Heart right ventricle (tissue), 16 donors: ENCODE measurements at regions of chr16 and their contacts with region 1.

Region 1: DNA sequence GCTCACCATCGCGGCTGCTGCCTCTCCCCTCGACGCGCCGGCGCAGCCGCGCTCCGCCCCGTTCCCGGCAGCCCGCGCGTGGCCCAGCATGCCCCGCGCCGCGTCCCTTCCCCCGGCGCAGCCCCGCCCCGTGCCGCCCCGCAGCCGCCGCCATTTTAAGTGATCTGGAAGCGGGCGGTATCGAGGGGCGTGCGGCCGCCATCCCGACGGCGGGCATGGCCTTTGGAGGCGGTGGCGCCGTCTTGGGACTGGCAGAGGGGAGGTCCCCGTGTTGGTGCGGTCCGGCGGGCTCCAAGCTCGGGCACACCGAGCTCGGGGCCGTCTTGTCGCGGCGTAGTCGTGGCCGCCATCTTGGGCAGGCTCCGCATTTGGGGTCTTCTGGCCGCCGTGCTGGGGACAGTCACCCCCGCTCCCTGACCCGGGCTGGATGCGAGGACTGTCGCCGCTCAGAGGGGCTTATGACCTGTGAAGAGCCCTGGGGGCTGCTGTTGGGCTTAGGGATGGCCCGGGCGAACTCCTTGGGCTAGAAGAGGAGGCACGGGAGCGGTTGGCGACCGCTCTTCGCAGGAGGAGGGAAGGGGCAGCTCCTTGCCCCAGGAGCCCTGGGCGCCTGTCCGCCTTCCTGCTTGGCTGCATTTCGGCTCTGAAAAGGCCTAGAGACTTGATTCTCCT is at the start of gene ELOB:
- DNase-seq: peak; percentile 87 to 90
- ATAC-seq: peak; percentile 92 to 98 (median 94)
- H3K4me3 ChIP-seq: peak within 1 kb of the TSS; percentile 81 to 100 (median 98)
- H3K27ac ChIP-seq: peak within 1 kb of the TSS; percentile 98 to 100 (median 100)
- H3K4me1 ChIP-seq: peaks cover 9 to 43% (median 28%) of the 10 kb centered on the region in 9 donors
- H3K27me3 ChIP-seq: no peaks in the 10 kb centered on the region
- CTCF ChIP-seq: no peak
- total RNA-seq, gene ELOB: 248 to 373 (median 323) TPM

Region 2: DNA sequence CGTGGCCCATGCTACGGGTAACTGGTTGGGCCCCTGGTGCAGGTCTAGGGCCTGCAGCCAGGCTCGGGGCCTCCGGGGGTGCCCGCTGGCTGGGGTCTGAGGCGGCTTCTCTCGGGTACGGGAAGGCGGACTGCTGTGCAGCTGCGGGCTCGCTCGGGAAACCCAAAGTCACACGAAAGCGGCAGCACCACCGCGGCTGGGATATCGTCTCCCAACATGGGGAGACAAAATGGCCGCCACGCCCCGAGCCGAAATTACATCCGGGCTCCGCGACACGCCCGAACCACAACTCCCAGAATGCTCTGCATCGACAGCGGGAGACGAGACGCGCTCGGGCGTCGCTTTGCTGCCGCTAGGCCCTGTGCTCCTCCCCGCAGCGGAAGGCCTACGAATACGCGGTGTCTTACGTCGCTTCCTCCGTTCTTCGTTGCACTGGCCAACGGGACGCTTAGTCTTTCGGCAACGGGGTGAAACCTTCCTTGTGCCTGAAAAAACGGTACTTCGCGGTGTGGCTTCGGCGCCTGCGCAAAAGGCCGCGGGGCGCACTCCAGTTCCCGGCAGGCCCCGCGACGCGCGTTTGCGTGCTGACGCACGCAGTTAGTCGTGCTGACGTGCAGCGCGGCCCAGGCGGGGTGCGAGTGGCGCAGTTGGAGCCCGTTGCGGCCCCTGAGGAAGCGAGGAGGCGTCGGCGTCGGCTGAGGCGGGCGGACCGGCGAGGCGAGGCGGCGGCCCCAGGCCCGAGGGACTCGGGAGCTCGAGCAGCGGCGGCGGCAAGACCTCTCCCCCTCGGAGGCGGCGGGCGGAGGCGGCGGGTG is 25.1 kb before region 1 on chr16 and contains the start of gene SRRM2:
- intact Hi-C with region 1: loop called in 5 of 10 experiments (anchors 1 to 2 kb)
- DNase-seq: peak; percentile 94 to 96
- ATAC-seq: peak; percentile 94 to 97 (median 96)
- H3K4me3 ChIP-seq: peak within 1 kb of the TSS; percentile 68 to 94 (median 82)
- H3K27ac ChIP-seq: peak within 1 kb of the TSS; percentile 94 to 100 (median 100)
- H3K4me1 ChIP-seq: peaks cover 12 to 49% (median 44%) of the 10 kb centered on the region in 9 donors
- H3K27me3 ChIP-seq: no peaks in the 10 kb centered on the region
- CTCF ChIP-seq: peak in 2 of 9 donors; percentile 10 to 23
- total RNA-seq, gene SRRM2: 228 to 392 (median 261) TPM